ENCODE measurements at regions of chr11 and their contacts with region 1.

Region 1: GRCh38 chr11:119057000-119057769 is at the start of gene HYOU1:
- H3K4me3 Mint-ChIP-seq: peak within 1 kb of the TSS; percentile 94
- H3K27ac Mint-ChIP-seq: peak within 1 kb of the TSS; percentile 89
- H3K4me1 Mint-ChIP-seq: peaks cover 50% of the 10 kb centered on the region
- H3K27me3 Mint-ChIP-seq: no peaks in the 10 kb centered on the region

Region 2: DNA sequence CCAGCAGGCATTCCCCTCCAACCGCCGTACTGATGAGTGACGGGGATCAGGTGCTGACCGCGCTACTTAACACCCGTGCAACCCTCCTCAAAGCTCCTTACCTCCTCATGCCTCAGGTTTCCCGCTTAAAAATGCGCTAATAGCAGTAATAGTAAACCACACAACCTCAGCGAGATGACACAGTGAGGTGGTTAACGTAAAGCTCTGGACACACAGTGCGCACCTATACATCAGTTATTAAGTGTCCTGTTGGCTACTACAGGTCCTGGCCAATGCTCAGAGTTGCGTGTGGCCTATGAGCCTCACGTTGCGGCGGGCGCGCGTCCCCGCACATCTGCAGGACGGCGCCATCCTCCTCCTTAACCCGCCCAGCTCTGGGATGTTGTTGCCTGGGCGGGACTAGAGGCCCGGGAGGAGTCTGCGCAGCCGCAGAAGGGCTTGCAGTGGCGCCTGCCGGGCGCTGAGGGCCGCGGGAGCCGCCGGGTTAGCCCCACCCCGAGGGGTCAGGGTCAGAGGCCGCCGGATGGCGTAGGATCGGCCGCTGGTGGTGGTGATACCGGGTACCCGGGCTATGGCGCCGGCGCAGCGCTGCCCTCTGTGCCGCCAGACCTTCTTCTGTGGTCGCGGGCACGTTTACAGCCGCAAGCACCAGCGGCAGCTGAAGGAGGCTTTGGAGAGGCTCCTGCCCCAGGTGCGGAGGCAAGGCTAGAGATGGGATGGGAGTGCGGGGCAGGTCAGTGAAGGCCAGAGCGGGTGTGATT is 59.4 kb before region 1 on chr11 and contains the start of gene CENATAC:
- intact Hi-C with region 1: loop called (anchors 2 kb)
- H3K4me3 Mint-ChIP-seq: peak within 1 kb of the TSS; percentile 100
- H3K27ac Mint-ChIP-seq: peak within 1 kb of the TSS; percentile 98
- H3K4me1 Mint-ChIP-seq: peaks cover 36% of the 10 kb centered on the region
- H3K27me3 Mint-ChIP-seq: no peaks in the 10 kb centered on the region

Region 3: DNA sequence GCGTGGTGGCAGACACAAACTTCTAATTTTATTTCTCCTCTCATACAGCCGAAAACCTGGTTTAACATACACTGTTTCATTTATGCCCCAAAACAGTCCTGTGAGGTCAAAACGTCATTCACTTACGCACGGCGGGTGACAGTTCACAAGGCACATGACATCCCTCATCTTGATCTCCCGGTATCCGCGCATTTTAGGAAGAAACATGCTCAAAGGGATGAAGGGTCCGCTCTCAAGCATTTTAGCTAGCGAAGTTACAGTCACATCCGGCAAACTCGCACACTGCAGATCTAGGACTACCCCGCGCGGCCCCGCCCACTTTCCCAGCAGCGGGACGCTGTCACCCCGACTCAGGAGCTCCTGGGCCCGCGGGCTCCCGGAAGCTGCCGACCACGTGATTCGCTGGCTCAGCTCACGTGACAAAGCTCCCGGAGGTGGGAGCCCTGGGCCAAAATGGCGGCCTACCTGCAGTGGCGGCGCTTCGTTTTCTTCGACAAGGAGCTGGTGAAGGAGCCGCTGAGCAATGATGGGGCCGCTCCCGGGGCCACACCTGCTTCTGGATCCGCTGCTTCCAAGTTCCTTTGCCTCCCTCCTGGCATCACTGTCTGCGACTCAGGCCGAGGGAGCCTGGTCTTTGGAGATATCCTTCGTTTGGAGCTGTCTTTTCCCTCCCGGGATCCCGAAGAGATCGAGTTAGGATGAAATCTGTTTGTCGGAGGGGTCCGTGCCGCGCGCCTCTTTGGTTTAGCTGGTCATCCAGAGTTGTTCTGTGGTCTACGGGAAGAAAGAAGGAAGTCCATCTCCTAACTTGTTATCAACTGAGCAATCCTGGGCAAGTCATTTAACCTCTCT is 10.4 kb after region 1 on chr11 and contains the start of gene VPS11:
- intact Hi-C with region 1: loop called (anchors 1 kb)
- H3K4me3 Mint-ChIP-seq: peak within 1 kb of the TSS; percentile 82
- H3K27ac Mint-ChIP-seq: peak within 1 kb of the TSS; percentile 94
- H3K4me1 Mint-ChIP-seq: peaks cover 30% of the 10 kb centered on the region
- H3K27me3 Mint-ChIP-seq: no peaks in the 10 kb centered on the region

Region 4: DNA sequence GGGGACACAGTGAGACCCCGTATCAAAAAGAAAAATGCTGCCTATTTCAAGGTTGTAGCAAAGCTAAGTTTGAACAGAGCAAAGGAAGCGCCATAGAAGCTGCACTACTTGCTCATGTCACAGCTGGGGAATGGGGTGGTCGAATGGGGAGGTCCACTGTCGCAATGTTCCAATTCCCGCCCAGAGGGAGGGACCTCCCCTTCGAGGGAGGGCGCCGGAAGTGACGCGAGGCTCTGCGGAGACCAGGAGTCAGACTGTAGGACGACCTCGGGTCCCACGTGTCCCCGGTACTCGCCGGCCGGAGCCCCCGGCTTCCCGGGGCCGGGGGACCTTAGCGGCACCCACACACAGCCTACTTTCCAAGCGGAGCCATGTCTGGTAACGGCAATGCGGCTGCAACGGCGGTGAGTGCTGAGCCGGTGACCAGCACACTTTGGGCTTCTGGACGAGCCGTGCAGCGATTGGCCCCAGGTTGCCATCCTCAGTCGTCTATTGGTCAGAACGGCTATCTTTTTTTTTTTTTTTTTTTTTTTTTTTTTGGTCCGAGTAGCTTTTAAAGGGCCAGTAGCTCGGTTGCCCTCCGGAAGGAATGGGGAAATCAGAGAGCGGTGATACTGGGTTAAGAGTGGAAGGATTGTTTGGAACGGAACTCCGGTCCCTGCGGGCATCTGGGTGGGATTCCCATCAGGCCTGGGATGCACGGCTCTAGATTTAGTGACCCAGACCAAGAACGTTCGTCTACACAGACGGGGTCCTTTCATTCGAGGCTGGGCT is 27.7 kb after region 1 on chr11 and contains the start of gene HMBS:
- intact Hi-C with region 1: loop called (anchors 1 kb)
- H3K4me3 Mint-ChIP-seq: peak within 1 kb of the TSS; percentile 90
- H3K27ac Mint-ChIP-seq: peak within 1 kb of the TSS; percentile 93
- H3K4me1 Mint-ChIP-seq: peaks cover 60% of the 10 kb centered on the region
- H3K27me3 Mint-ChIP-seq: no peaks in the 10 kb centered on the region

Region 5: GRCh38 chr11:119095066-119095880 is 38.1 kb after region 1 on chr11:
- intact Hi-C with region 1: loop called (anchors 1 kb)
- H3K4me3 Mint-ChIP-seq: peak overlapping the region; percentile 90
- H3K27ac Mint-ChIP-seq: peak overlapping the region; percentile 90
- H3K4me1 Mint-ChIP-seq: peaks cover 50% of the 10 kb centered on the region
- H3K27me3 Mint-ChIP-seq: no peaks in the 10 kb centered on the region

Region 6: GRCh38 chr11:119295178-119295577 is 238.0 kb after region 1 on chr11:
- intact Hi-C with region 1: no loop called
- H3K4me3 Mint-ChIP-seq: no peak overlapping the region
- H3K27ac Mint-ChIP-seq: no peak overlapping the region
- H3K4me1 Mint-ChIP-seq: no peaks in the 10 kb centered on the region
- H3K27me3 Mint-ChIP-seq: no peaks in the 10 kb centered on the region

Measured in dendritic cell treated with granulocyte-macrophage colony-stimulating factor and Interleukin-4, amounts not matched to agents 40 ng/mL and 50 ng/mL, for 4 days (primary cell).